ENCODE measurements at regions of chr1 and their contacts with region 1.

Region 1: GRCh38 chr1:153734396-153735089 is 6.7 kb downstream of the INTS3 start:
- DNase-seq: no peak
- ATAC-seq: no peak
- H3K4me3 ChIP-seq: no peak overlapping the region
- H3K27ac ChIP-seq: no peak overlapping the region
- H3K4me1 ChIP-seq: peaks cover 7% of the 10 kb centered on the region
- H3K27me3 ChIP-seq: no peaks in the 10 kb centered on the region

Region 2: DNA sequence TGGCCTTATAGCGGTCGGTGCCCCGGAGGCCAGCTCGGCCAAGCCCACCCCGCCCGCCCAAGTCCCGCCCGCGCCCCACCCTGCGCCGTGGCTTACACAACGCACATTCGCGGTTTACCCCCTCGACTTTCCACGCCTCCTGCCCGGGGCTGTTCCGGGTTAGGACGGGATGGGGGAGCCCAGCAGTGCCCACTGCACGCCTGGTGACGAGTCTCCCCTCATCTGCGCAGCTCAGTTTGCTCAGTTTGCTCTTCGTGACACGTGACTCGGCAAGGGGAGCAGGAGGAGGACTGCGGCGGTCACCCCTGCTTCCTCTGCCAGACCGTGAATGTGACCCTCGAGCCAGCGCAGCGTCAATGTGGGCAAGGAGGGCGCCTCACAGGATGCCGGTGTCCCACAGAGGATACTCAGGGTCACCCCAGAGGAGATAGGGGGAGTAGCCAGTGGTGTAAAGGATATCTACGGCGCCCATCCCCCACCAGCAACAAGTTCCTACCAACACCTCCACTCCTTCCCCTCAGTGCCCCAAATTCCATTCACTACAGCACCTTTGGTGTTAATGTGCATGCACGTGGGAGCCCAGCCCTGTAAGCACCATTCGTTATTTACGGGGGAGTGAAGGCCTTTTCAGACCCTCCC is 198.4 kb before region 1 on chr1:
- intact Hi-C with region 1: no loop called
- DNase-seq: peak; percentile 92 to 96 (median 95)
- ATAC-seq: peak; percentile 86
- H3K4me3 ChIP-seq: peak overlapping the region; percentile 73
- H3K27ac ChIP-seq: peak overlapping the region; percentile 97
- H3K4me1 ChIP-seq: no peaks in the 10 kb centered on the region
- H3K27me3 ChIP-seq: no peaks in the 10 kb centered on the region

Region 3: GRCh38 chr1:153688276-153688675 is 46.3 kb before region 1 on chr1:
- intact Hi-C with region 1: loop called in 1 of 4 experiments (anchors 5 kb)
- DNase-seq: no peak
- ATAC-seq: peak in 1 of 2 donors; percentile 9
- H3K4me3 ChIP-seq: no peak overlapping the region
- H3K27ac ChIP-seq: no peak overlapping the region
- H3K4me1 ChIP-seq: no peaks in the 10 kb centered on the region
- H3K27me3 ChIP-seq: no peaks in the 10 kb centered on the region

Region 4: GRCh38 chr1:153783233-153784190 is 49.0 kb after region 1 on chr1:
- intact Hi-C with region 1: no loop called
- DNase-seq: peak; percentile 94 to 97 (median 96)
- ATAC-seq: peak; percentile 96
- H3K4me3 ChIP-seq: peak overlapping the region; percentile 51
- H3K27ac ChIP-seq: peak overlapping the region; percentile 76
- H3K4me1 ChIP-seq: peaks cover 6% of the 10 kb centered on the region
- H3K27me3 ChIP-seq: no peaks in the 10 kb centered on the region